ENCODE measurements at regions of chr11 and their contacts with region 1.

Region 1: DNA sequence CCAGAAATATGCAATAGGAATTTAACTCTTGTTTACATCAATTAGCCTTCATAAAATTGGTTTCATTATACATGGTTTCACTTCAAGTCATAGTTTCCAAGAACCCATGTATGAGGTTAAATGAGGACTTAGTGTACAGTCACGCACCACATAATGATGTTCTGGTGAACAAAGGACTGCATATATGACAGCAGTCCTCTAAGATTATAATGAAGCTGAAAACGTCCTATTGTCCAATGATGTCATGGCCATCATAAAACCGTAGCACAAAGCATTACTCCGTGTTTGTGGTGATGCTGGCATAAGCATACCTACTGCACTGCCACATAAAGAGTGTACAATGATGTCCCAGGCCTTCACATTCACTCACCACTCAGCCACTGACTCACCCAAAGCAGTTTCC is 31.1 kb downstream of the SMCO4 start:
- DNase-seq: no peak
- H3K4me3 Mint-ChIP-seq: peak overlapping the region; percentile 70
- H3K27ac Mint-ChIP-seq: peak overlapping the region; percentile 94
- H3K4me1 Mint-ChIP-seq: peaks cover 49% of the 10 kb centered on the region
- H3K27me3 Mint-ChIP-seq: no peaks in the 10 kb centered on the region

Region 2: DNA sequence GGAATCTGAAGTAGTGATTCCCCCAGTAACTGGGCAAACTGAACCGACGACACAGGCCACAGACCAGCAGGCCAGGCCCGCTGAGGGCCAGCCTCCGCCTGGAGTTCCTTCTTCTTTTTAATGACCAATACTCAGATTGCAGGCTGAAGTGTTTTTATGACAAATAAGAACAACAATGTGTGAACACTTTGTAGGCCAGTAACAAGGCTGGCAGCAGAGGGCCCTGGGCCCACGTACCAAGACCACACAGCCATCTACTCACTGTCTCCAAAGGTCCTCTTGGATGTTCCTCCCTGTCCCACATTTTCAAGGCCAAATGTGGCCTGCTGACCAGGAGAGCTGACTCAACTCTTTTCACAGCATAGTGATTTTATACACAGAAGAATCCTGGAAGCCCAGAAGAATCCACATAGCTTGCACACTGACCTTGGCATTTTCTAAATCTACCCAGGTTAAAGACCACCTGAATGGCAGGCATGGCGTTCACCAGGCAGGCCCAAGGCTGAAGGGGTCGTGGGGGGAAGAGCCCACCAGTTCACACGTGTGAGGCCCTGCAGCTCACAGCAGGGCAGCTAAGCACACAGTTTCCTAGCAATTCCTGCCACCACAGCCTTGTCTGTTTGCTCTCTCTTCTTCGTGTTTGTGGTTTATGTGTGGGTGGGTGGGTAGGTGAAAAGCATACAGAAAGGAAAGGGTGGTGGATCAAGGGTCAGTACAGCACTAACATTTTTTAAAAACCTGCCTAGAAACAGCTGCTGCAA is 17.8 kb after region 1 on chr11:
- intact Hi-C with region 1: loop called (anchors 2 kb)
- DNase-seq: no peak
- H3K4me3 Mint-ChIP-seq: peak overlapping the region; percentile 3
- H3K27ac Mint-ChIP-seq: peak overlapping the region; percentile 63
- H3K4me1 Mint-ChIP-seq: peaks cover 84% of the 10 kb centered on the region
- H3K27me3 Mint-ChIP-seq: no peaks in the 10 kb centered on the region

Region 3: DNA sequence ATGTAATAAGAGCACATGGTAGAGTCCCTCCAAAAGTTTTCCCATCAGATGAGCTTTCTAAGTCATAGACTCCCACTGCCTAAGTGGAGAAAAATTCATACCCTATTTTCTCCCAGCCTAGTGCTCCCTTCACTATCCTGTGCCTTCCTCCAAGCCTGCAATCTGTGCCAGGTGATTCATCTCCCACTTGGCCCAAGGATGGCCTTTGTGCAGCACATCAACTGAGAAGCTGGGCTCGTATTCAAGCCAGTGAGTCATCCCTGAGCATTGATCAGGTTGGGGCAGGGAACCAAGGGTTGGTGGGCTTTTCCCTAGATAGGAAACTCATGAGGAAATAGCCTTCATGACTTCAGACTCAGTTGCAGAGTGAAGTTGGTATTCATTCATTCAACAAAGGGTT is 681.2 kb after region 1 on chr11:
- intact Hi-C with region 1: no loop called
- DNase-seq: no peak
- H3K4me3 Mint-ChIP-seq: no peak overlapping the region
- H3K27ac Mint-ChIP-seq: no peak overlapping the region
- H3K4me1 Mint-ChIP-seq: no peaks in the 10 kb centered on the region
- H3K27me3 Mint-ChIP-seq: no peaks in the 10 kb centered on the region

Measured in activated T-helper 1 cell treated with anti-CD3 and anti-CD28 coated beads, Interleukin-12 subunit alpha, Interleukin-12 subunit beta, Interleukin-2, Interleukin-4 antibody, amounts not matched to agents 30 ng/mL and 10 ng/mL and 1 ng/mL, durations not matched to agents 14 hours and 24 hours and 36 hours (primary cell).